ENCODE measurements at regions of chr2 and their contacts with region 1.

Region 1: GRCh38 chr2:74653985-74654882 is at the start of gene SEMA4F:
- DNase-seq: peak; percentile 89 to 95 (median 92)
- H3K4me3 ChIP-seq: peak within 1 kb of the TSS; percentile 63
- H3K4me3 Mint-ChIP-seq: peak within 1 kb of the TSS; percentile 88 to 97 (median 93)
- H3K27ac ChIP-seq: peak within 1 kb of the TSS; percentile 40
- H3K27ac Mint-ChIP-seq: peak within 1 kb of the TSS; percentile 59 to 96 (median 86)
- H3K4me1 ChIP-seq: peaks cover 10% of the 10 kb centered on the region
- H3K4me1 Mint-ChIP-seq: peaks cover 21 to 22% (median 22%) of the 10 kb centered on the region in 3 donors
- H3K27me3 ChIP-seq: no peaks in the 10 kb centered on the region
- H3K27me3 Mint-ChIP-seq: peaks cover 5% of the 10 kb centered on the region in 2 donors
- total RNA-seq, gene SEMA4F: 7.8 to 8.5 TPM

Region 2: GRCh38 chr2:72793798-72794440 is 1860.3 kb before region 1 on chr2:
- CTCF ChIA-PET with region 1: no interaction called
- POLR2A ChIA-PET with region 1: interaction called, 13 read pairs
- DNase-seq: no peak
- H3K4me3 ChIP-seq: no peak overlapping the region
- H3K4me3 Mint-ChIP-seq: no peak overlapping the region
- H3K27ac ChIP-seq: no peak overlapping the region
- H3K27ac Mint-ChIP-seq: peak overlapping the region in 1 of 8 donors; percentile 15
- H3K4me1 ChIP-seq: no peaks in the 10 kb centered on the region
- H3K4me1 Mint-ChIP-seq: peaks cover 12 to 20% (median 19%) of the 10 kb centered on the region in 3 donors
- H3K27me3 ChIP-seq: no peaks in the 10 kb centered on the region
- H3K27me3 Mint-ChIP-seq: no peaks in the 10 kb centered on the region

Region 3: DNA sequence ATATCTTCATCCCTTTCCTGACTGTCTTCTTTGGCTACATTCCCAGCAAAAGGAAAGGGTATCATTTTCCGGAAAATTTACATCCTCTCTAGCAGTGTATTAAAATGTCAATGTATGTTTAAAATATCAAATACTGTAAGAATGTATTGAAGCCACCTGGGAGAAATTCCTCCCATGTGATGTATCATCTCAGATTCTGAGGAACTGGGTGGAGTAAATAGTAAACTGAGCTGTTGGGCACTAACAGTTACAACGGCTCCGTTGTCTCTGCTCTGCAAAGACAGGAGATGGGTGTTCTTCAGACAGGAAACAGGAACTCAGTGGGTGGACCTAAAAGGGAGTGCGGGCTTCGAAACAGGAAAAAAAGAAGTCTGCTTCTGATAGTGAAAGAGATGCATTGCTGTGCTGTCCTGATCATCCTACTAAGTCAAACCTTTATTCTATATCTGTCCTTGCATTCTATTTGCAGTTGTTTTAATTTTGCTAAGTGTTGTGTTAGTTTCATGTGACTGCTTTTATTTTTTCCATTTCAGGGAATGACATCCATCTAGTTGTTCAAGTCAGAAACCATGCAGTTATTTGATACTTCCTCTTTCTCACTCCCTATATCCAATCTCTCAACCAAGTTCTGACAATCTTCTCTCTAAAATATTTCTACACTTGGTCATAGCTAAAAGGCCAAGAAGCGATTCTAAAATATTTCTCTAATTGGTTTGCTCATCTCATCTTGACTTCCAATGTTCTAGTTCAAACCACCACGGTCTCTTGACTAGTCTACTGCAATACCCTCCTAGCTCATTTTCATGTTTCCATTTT is 80.3 kb before region 1 on chr2:
- CTCF ChIA-PET with region 1: no interaction called
- POLR2A ChIA-PET with region 1: no interaction called
- DNase-seq: peak in 1 of 5 donors; percentile 39
- H3K4me3 ChIP-seq: peak overlapping the region; percentile 22
- H3K4me3 Mint-ChIP-seq: peak overlapping the region in 6 of 7 donors; percentile 30 to 72 (median 64)
- H3K27ac ChIP-seq: no peak overlapping the region
- H3K27ac Mint-ChIP-seq: peak overlapping the region; percentile 15 to 87 (median 76)
- H3K4me1 ChIP-seq: peaks cover 11% of the 10 kb centered on the region
- H3K4me1 Mint-ChIP-seq: peaks cover 14 to 15% (median 15%) of the 10 kb centered on the region in 3 donors
- H3K27me3 ChIP-seq: no peaks in the 10 kb centered on the region
- H3K27me3 Mint-ChIP-seq: no peaks in the 10 kb centered on the region

Region 4: DNA sequence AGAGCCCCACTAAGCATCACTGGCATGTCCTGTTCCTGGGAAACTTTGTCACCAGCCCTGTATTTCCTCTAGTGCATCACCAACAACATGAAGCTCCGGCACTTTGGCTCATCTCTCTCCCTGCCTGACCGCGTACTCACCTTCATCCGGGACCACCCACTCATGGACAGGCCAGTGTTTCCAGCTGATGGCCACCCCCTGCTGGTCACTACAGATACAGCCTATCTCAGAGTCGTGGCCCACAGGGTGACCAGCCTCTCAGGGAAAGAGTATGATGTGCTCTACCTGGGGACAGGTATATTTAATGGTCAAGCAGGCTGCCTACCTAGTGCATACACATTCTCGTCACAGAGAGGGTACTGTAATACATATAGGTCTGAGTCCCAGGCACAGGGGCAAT is 20.9 kb after region 1 on chr2:
- CTCF ChIA-PET with region 1: no interaction called
- POLR2A ChIA-PET with region 1: no interaction called
- DNase-seq: no peak
- H3K4me3 ChIP-seq: no peak overlapping the region
- H3K4me3 Mint-ChIP-seq: no peak overlapping the region
- H3K27ac ChIP-seq: no peak overlapping the region
- H3K27ac Mint-ChIP-seq: no peak overlapping the region
- H3K4me1 ChIP-seq: no peaks in the 10 kb centered on the region
- H3K4me1 Mint-ChIP-seq: no peaks in the 10 kb centered on the region
- H3K27me3 ChIP-seq: no peaks in the 10 kb centered on the region
- H3K27me3 Mint-ChIP-seq: no peaks in the 10 kb centered on the region

Region 5: GRCh38 chr2:74756356-74756890 is 102.2 kb after region 1 on chr2:
- CTCF ChIA-PET with region 1: no interaction called
- POLR2A ChIA-PET with region 1: no interaction called
- DNase-seq: no peak
- H3K4me3 ChIP-seq: no peak overlapping the region
- H3K4me3 Mint-ChIP-seq: no peak overlapping the region
- H3K27ac ChIP-seq: no peak overlapping the region
- H3K27ac Mint-ChIP-seq: no peak overlapping the region
- H3K4me1 ChIP-seq: no peaks in the 10 kb centered on the region
- H3K4me1 Mint-ChIP-seq: no peaks in the 10 kb centered on the region
- H3K27me3 ChIP-seq: no peaks in the 10 kb centered on the region
- H3K27me3 Mint-ChIP-seq: peaks cover 6 to 32% of the 10 kb centered on the region in 2 donors